ENCODE measurements at regions of chr4 and their contacts with region 1.

Region 1: GRCh38 chr4:115437739-115438138 is 324.3 kb upstream of the NDST4 start:
- DNase-seq: no peak
- H3K4me3 ChIP-seq: no peak overlapping the region
- H3K27ac ChIP-seq: no peak overlapping the region
- H3K4me1 ChIP-seq: no peaks in the 10 kb centered on the region
- CTCF ChIP-seq: no peak

Region 2: DNA sequence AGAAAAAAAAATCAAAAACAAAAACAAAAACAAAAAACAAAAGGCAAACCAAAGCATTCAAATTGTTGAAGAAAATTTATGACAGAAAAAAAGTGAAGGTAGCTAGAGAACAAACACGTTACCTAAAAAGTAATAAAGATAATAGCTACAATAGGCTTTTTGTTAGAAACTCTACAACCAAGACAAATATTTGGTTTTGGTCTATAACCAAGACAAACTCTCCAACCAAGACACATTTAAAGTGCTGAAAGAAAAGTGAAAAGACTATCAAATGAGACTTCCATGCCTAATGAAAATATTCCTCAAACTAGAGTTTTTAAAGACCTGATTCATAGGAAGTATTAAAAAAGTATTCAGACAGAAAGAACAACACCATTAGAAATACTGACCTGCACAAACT is 67.6 kb after region 1 on chr4:
- CTCF ChIA-PET with region 1: no interaction called
- POLR2A ChIA-PET with region 1: interaction called, 10 read pairs
- intact Hi-C with region 1: no loop called
- DNase-seq: no peak
- H3K4me3 ChIP-seq: no peak overlapping the region
- H3K27ac ChIP-seq: no peak overlapping the region
- H3K4me1 ChIP-seq: no peaks in the 10 kb centered on the region
- CTCF ChIP-seq: no peak

Measured in OCI-LY7 (cell line).